ENCODE measurements at regions of chr6 and their contacts with region 1.

Region 1: GRCh38 chr6:123415844-123416468 is 220.8 kb downstream of the TRDN start:
- DNase-seq: peak in 1 of 2 donors; percentile 40
- ATAC-seq: no peak
- H3K4me3 ChIP-seq: no peak overlapping the region
- H3K4me3 Mint-ChIP-seq: no peak overlapping the region
- H3K27ac ChIP-seq: no peak overlapping the region
- H3K27ac Mint-ChIP-seq: no peak overlapping the region
- H3K4me1 ChIP-seq: no peaks in the 10 kb centered on the region
- H3K4me1 Mint-ChIP-seq: no peaks in the 10 kb centered on the region
- H3K27me3 ChIP-seq: no peaks in the 10 kb centered on the region
- H3K27me3 Mint-ChIP-seq: no peaks in the 10 kb centered on the region
- CTCF ChIP-seq: peak; percentile 50

Region 2: DNA sequence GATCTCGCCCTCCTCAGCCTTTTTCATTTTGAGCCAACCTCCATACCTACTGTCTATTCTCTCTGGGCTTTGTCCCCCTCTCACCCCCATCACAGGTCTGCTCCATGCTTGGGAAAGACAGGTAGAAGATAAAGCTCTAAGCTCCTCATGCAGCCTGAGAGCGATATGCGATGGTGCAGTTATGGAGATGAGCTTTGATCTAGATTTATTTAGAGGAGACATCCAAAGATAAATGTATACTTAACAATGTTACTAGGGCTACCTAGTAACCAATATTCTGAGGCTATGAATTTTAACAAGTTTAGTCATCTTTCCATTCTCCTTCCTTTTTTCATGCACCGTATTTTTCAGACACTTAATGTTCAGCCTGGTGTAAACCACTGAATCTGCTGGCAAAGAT is 125.5 kb after region 1 on chr6:
- intact Hi-C with region 1: no loop called
- DNase-seq: no peak
- ATAC-seq: no peak
- H3K4me3 ChIP-seq: no peak overlapping the region
- H3K4me3 Mint-ChIP-seq: no peak overlapping the region
- H3K27ac ChIP-seq: no peak overlapping the region
- H3K27ac Mint-ChIP-seq: no peak overlapping the region
- H3K4me1 ChIP-seq: no peaks in the 10 kb centered on the region
- H3K4me1 Mint-ChIP-seq: no peaks in the 10 kb centered on the region
- H3K27me3 ChIP-seq: no peaks in the 10 kb centered on the region
- H3K27me3 Mint-ChIP-seq: no peaks in the 10 kb centered on the region
- CTCF ChIP-seq: no peak

Region 3: DNA sequence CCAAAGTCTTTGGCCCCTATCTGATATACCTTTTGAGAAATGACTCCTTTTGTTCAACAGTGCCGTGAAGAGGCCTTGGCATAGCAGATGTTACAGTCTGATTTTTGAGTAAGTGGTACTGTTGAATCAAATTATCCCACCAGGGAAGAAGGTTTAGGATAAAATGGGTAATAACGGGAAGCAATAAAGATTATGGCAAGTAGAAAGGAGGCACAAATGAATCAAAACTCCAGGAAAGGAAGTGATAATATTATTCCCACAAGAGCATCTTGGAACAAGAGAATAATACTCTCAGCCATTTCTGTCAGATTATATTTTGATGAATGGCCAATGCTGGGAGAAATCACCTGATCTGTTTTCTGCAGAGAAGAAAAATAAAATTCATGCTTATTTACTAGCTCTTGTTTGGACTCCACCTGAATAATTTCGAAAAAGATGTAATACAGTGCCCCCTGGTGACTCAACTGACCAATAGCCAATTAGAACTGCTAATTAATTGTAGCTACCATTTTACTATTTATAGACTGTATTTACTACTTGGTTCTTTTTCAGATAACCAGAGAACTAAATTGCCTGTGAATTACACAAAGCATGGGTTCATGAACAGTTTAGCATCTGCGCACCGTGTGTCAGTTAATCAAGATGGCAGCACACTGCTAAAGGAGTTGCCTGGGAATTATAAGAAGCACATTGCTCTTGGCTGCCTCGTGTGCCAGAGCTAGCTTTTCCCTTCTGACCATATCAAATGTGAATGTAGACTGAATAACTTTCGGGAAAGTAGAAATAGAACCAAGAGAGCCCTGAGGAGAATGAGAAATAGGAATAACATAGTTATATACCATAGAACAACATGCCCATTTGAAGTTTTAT is 299.3 kb after region 1 on chr6:
- intact Hi-C with region 1: loop called (anchors 10 kb)
- DNase-seq: peak in 1 of 2 donors; percentile 3
- ATAC-seq: no peak
- H3K4me3 ChIP-seq: no peak overlapping the region
- H3K4me3 Mint-ChIP-seq: no peak overlapping the region
- H3K27ac ChIP-seq: no peak overlapping the region
- H3K27ac Mint-ChIP-seq: no peak overlapping the region
- H3K4me1 ChIP-seq: no peaks in the 10 kb centered on the region
- H3K4me1 Mint-ChIP-seq: no peaks in the 10 kb centered on the region
- H3K27me3 ChIP-seq: no peaks in the 10 kb centered on the region
- H3K27me3 Mint-ChIP-seq: no peaks in the 10 kb centered on the region
- CTCF ChIP-seq: no peak